ENCODE measurements at regions of chr1 and their contacts with region 1.

Region 1: DNA sequence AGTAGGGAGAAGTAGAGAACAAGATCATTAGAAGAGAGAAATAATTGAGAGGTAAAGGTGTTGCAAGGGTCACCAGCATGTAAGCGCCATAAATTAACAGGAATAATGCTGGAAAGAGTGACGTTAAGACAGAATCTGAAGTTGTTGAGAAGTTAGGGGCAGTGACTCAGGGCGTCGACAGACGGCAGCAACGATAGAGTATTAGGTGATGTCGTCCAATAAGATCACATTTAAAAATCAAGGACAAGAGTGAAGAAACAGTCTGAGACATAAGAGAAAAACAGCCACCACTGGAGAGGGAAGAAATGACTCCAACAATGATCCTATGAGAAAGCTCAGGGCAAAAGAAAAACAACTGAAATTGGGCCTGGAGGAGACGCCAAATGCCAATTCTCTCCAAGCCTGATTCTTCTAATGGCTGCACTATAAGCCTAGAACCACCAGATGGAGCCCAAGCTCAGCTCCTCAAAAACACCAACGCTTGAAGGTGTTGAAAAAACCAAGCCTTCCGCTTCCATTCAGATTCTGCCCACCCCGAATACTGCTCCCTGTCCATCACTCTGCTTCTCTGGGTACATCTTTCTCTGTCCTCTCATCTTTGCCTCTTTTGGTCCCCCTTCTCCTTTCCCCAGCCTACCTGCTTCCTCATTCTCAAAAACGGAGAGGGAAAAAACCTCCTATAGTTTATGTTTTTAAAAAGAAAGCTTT is 70.0 kb downstream of the LUZP1 start:
- DNase-seq: no peak
- H3K4me3 ChIP-seq: no peak overlapping the region
- H3K27me3 ChIP-seq: no peaks in the 10 kb centered on the region
- CTCF ChIP-seq: peak; percentile 92

Region 2: GRCh38 chr1:22976461-22977243 is 122.0 kb before region 1 on chr1:
- CTCF ChIA-PET with region 1: interaction called, 11 read pairs
- POLR2A ChIA-PET with region 1: no interaction called
- DNase-seq: peak; percentile 26
- H3K4me3 ChIP-seq: no peak overlapping the region
- H3K27me3 ChIP-seq: peaks cover 10% of the 10 kb centered on the region
- CTCF ChIP-seq: peak; percentile 81

Region 3: GRCh38 chr1:23122023-23122748 is 23.6 kb after region 1 on chr1:
- CTCF ChIA-PET with region 1: interaction called, 10 read pairs
- POLR2A ChIA-PET with region 1: interaction called, 3 read pairs
- DNase-seq: no peak
- H3K4me3 ChIP-seq: no peak overlapping the region
- H3K27me3 ChIP-seq: no peaks in the 10 kb centered on the region
- CTCF ChIP-seq: no peak

Region 4: GRCh38 chr1:23177438-23178380 is 79.1 kb after region 1 on chr1:
- CTCF ChIA-PET with region 1: interaction called, 412 read pairs
- POLR2A ChIA-PET with region 1: no interaction called
- DNase-seq: no peak
- H3K4me3 ChIP-seq: peak overlapping the region; percentile 47
- H3K27me3 ChIP-seq: no peaks in the 10 kb centered on the region
- CTCF ChIP-seq: no peak

Region 5: GRCh38 chr1:23196639-23197328 is 98.2 kb after region 1 on chr1:
- CTCF ChIA-PET with region 1: interaction called, 21 read pairs
- POLR2A ChIA-PET with region 1: no interaction called
- DNase-seq: peak; percentile 80
- H3K4me3 ChIP-seq: no peak overlapping the region
- H3K27me3 ChIP-seq: no peaks in the 10 kb centered on the region
- CTCF ChIP-seq: no peak